Activated naive CD4-positive, alpha-beta T cell treated with anti-CD3 and anti-CD28 coated beads for 36 hours (primary cell): ENCODE measurements at regions of chr1 and their contacts with region 1.

Region 1: GRCh38 chr1:160629286-160630210 is 17.3 kb downstream of the SLAMF1 start:
- DNase-seq: peak; percentile 91
- H3K4me3 Mint-ChIP-seq: peak overlapping the region; percentile 66
- H3K27ac Mint-ChIP-seq: peak overlapping the region; percentile 96
- H3K4me1 Mint-ChIP-seq: peaks cover 95% of the 10 kb centered on the region
- H3K27me3 Mint-ChIP-seq: no peaks in the 10 kb centered on the region

Region 2: DNA sequence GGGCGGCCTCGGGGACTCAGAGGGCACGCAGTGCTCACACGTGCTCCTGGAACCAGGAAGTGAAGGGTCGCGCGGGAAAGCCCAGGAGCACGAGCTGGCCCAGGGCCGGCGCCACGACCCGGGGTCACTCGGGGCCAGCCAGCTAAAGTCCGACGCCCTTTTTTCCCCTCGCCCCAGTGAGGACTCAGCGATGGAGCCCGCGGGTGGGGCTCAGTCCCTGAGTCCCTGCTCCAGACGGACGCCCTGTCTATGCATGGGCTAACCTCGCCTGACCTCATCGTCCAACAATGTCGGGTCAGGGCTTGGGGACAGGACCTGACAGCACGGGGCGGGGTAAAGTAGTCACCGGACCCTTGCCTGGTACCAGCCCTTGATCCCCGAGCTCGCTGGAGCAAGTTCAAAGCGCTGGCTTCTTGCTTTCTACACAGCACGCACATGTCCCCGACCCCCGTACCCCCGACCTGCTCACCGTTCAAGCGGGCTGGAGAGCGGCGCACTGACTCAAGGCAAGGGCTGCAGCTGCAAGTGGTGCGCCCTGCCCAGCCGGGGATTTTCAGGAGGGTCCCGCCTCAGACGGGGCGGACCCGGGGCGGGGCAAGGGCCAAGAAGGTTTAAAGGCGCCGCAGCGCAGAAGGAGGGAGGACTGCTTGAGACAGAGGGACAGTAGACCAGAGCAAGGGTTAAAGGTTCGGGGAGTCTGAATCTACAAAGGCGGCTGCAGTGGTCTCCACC is 704.4 kb before region 1 on chr1 and contains the start of gene TAGLN2:
- CTCF ChIA-PET with region 1: no interaction called
- intact Hi-C with region 1: loop called (anchors 10 kb)
- DNase-seq: peak; percentile 89
- H3K4me3 Mint-ChIP-seq: peak within 1 kb of the TSS; percentile 91
- H3K27ac Mint-ChIP-seq: peak within 1 kb of the TSS; percentile 93
- H3K4me1 Mint-ChIP-seq: peaks cover 42% of the 10 kb centered on the region
- H3K27me3 Mint-ChIP-seq: no peaks in the 10 kb centered on the region
- total RNA-seq, gene TAGLN2: 453 to 454 TPM

Region 3: GRCh38 chr1:160284782-160285344 is 344.7 kb before region 1 on chr1 and contains the start of gene PEX19:
- CTCF ChIA-PET with region 1: no interaction called
- intact Hi-C with region 1: no loop called
- DNase-seq: peak; percentile 97
- H3K4me3 Mint-ChIP-seq: peak within 1 kb of the TSS; percentile 98
- H3K27ac Mint-ChIP-seq: peak within 1 kb of the TSS; percentile 87
- H3K4me1 Mint-ChIP-seq: peaks cover 18% of the 10 kb centered on the region
- H3K27me3 Mint-ChIP-seq: no peaks in the 10 kb centered on the region
- total RNA-seq, gene PEX19: 58.3 to 65.4 TPM

Region 4: GRCh38 chr1:160618763-160619274 is 10.7 kb before region 1 on chr1:
- CTCF ChIA-PET with region 1: interaction called, 19 read pairs
- intact Hi-C with region 1: no loop called
- DNase-seq: peak; percentile 70
- H3K4me3 Mint-ChIP-seq: no peak overlapping the region
- H3K27ac Mint-ChIP-seq: peak overlapping the region; percentile 61
- H3K4me1 Mint-ChIP-seq: peaks cover 57% of the 10 kb centered on the region
- H3K27me3 Mint-ChIP-seq: no peaks in the 10 kb centered on the region

Region 5: DNA sequence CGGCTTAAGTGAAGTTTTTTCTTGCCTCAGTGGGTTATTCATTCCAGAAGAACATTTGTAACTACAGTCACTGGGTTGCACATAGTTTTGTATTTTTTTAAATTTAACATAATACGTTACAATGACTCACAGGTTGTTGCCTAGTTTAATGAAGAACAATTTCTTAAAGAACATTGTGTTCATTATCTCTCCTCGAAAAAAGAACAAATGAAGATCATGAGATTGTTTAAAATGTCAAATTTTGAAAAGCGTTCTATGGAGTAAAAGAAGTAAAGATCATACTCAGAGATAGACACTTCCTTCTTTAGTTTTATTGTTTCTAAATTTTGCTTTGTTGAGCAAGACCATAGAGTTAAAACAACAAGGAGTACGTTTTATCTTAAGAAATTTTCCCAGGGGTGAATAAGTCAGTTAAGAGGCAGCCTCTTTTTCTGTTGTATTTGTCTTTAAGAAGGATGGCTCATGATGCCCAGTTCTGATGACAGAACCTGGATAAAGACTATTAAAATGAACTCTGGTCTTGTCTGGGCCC is 27.8 kb after region 1 on chr1:
- CTCF ChIA-PET with region 1: interaction called, 3 read pairs
- intact Hi-C with region 1: loop called (anchors 1 kb)
- DNase-seq: no peak
- H3K4me3 Mint-ChIP-seq: peak overlapping the region; percentile 23
- H3K27ac Mint-ChIP-seq: peak overlapping the region; percentile 91
- H3K4me1 Mint-ChIP-seq: peaks cover 81% of the 10 kb centered on the region
- H3K27me3 Mint-ChIP-seq: no peaks in the 10 kb centered on the region

Region 6: DNA sequence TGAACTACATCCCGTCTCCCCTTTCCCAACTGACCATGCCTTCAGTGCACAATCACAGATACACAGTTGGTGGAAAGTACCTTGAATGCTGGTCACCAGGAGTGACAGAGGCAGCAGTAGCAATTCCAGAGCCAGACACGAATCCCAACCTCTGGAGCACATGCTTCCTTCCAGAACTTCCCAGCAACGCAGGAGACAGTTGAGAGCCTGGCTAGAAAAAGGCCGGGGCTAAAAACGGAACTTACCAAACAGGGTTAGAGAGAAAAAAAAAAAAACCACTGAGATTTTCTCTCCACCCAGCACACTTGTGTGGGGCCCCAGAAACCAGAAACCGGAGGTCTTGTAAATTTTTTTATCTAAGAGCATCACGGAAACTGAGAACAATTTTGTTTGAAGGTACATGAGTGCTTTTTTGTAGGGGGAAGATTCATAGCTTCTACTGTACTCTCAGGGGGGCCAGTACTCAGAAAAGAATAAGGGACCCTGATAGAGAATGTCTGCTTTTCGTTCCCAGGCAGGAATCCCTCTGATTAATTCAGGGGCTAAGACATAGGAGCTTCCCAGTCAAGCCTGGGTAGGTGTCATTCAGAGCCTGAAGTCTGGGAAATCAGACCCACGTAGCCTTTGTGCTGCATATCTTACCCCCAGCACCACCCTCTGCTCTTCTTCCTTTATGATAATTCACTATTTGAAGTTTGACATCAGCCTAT is 82.2 kb after region 1 on chr1 and contains the start of gene CD48:
- CTCF ChIA-PET with region 1: interaction called, 3 read pairs
- intact Hi-C with region 1: loop called (anchors 1 kb)
- DNase-seq: peak; percentile 70
- H3K4me3 Mint-ChIP-seq: no peak within 1 kb of the TSS
- H3K27ac Mint-ChIP-seq: no peak within 1 kb of the TSS
- H3K4me1 Mint-ChIP-seq: peaks cover 28% of the 10 kb centered on the region
- H3K27me3 Mint-ChIP-seq: no peaks in the 10 kb centered on the region
- total RNA-seq, gene CD48: 338 to 340 TPM

Region 7: GRCh38 chr1:160789702-160790611 is 160.4 kb after region 1 on chr1:
- CTCF ChIA-PET with region 1: no interaction called
- intact Hi-C with region 1: no loop called
- DNase-seq: no peak
- H3K4me3 Mint-ChIP-seq: no peak overlapping the region
- H3K27ac Mint-ChIP-seq: no peak overlapping the region
- H3K4me1 Mint-ChIP-seq: peaks cover 4% of the 10 kb centered on the region
- H3K27me3 Mint-ChIP-seq: no peaks in the 10 kb centered on the region